CD4-positive, alpha-beta T cell (primary cell): ENCODE measurements at regions of chr22 and their contacts with region 1.

Region 1: DNA sequence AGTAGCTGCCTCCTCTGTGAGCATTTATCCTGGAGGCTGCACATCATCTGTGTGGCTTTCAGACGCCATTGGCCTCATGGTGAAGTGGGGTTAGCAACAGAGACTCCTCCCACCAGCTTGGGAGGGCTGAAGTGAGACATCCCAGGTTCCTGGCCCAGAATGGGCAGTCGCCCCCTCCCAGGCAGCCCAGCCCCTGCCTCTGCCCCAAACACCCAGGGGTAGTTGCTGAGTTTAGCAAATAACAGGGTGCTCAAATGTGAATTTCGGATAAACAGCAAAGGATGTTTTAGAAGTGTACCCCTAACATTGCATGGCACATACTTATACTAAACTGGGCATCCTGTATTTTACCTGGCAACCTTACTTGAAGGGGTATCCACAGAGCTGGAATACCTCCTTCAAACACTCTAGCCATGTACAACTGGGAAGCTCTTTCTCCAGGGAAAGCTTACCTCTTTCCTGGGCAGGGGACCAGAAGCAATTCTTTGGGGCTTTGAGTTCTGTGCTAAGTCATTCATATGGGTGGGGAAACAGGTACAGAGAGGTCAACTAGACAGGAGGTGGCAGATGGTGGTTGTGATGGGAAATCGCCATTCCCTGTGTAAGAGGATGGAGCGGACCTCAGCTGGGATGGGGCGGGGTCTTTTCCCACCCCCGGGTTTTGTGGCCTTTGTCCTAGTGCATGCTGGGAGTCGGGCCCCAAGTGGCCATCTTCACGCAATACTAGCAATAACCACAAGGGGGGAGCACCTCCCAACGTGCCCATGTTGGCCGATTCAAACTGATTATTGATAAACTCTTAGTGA is 19.3 kb downstream of the MTFP1 start:
- DNase-seq: peak in 8 of 14 experiments; percentile 19 to 75 (median 44)
- ATAC-seq: peak; percentile 63
- H3K4me3 ChIP-seq: no peak overlapping the region
- H3K4me3 Mint-ChIP-seq: no peak overlapping the region
- H3K27ac ChIP-seq: no peak overlapping the region
- H3K27ac Mint-ChIP-seq: no peak overlapping the region
- H3K4me1 ChIP-seq: peaks cover 18% of the 10 kb centered on the region
- H3K4me1 Mint-ChIP-seq: peaks cover 16% of the 10 kb centered on the region
- H3K27me3 ChIP-seq: peaks cover 17 to 19% of the 10 kb centered on the region in 2 experiments
- H3K27me3 Mint-ChIP-seq: peaks cover 72% of the 10 kb centered on the region
- CTCF ChIP-seq: peak; percentile 68

Region 2: DNA sequence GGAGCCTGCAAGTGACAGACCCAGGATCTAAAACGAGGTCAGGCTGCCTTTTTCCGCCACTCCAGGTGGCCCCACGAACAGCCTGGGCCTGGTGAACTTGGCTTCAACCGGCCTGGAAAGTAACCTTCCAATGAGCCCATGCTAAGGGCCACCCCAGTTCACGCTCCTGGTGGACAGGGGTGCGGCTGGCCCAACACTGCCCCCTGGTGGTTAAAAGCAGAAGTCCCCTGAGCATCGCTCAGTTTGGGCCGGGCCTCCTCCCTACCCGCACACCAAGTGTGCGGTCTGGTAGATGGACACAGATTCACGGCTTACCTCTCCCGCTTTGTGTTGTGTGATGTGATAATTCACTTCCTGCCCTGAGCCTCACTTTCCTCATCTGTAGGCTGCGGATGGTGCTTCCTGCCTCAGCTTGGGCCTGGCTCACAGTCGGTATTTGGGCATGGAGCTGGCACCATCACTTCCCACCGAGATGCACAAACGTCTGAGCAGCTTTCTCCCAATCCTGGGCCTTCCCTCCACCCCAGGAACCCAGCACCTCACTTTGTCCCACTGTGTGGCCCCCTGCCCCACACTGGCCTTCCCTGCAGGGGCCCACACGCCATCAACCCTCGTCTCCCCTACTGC is 40.6 kb after region 1 on chr22:
- CTCF ChIA-PET with region 1: interaction called, 8 read pairs
- POLR2A ChIA-PET with region 1: no interaction called
- intact Hi-C with region 1: loop called in 1 of 2 experiments (anchors 5 kb)
- DNase-seq: peak; percentile 58 to 88 (median 74)
- ATAC-seq: peak; percentile 98
- H3K4me3 ChIP-seq: no peak overlapping the region
- H3K4me3 Mint-ChIP-seq: no peak overlapping the region
- H3K27ac ChIP-seq: no peak overlapping the region
- H3K27ac Mint-ChIP-seq: no peak overlapping the region
- H3K4me1 ChIP-seq: peaks cover 6% of the 10 kb centered on the region
- H3K4me1 Mint-ChIP-seq: no peaks in the 10 kb centered on the region
- H3K27me3 ChIP-seq: peaks cover 0 to 2% of the 10 kb centered on the region in 2 experiments
- H3K27me3 Mint-ChIP-seq: peaks cover 5% of the 10 kb centered on the region
- CTCF ChIP-seq: peak; percentile 98